Prostate gland (tissue), 2 donors: ENCODE measurements at regions of chr3 and their contacts with region 1.

Region 1: DNA sequence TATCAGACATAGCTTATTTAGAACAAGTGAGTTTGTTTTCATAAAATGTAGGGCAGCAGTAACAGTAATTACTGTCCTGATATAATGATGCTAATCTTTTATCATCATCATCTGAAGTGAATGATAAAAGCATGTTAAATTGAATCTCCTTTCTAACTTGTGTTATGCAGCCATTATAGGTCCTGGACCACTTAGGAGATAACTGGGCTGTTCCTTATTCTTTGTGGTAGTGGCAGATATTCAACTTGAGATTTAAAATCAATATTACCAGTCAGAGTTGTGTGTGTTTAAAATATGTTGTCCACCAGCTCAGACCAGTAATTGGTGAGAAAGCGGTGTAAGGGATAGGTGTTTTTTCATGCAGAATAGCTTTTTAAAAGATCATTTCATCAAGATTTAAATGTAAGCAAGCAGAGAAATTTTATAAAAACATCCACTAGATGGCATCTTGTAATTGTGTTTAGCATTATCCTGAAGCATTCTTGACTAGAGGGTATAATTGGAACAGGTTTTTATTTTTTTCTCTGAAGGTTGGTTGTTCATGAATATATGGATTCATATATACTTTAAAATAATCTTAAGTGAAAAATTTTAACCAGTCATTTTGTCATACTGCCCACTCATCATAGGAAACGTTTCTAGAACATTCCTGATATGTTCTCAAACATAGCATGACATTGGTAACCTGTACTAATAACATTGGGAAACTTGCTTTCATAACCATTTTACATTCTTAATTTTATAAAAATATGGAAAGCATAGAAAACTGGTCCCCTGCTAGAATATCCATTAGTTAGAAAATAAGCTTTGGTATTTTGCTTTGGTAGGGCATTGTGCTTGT is 153.9 kb downstream of the BBX start:
- DNase-seq: no peak
- H3K4me3 ChIP-seq: no peak overlapping the region
- H3K27ac ChIP-seq: no peak overlapping the region
- H3K4me1 ChIP-seq: no peaks in the 10 kb centered on the region
- H3K27me3 ChIP-seq: no peaks in the 10 kb centered on the region
- CTCF ChIP-seq: peak in 3 of 4 experiments; percentile 55 to 64 (median 57)
- POLR2A ChIP-seq: no peak

Region 2: GRCh38 chr3:107429320-107430181 is 247.1 kb before region 1 on chr3:
- intact Hi-C with region 1: loop called (anchors 10 kb)
- DNase-seq: peak; percentile 69
- H3K4me3 ChIP-seq: peak overlapping the region; percentile 64 to 68
- H3K27ac ChIP-seq: peak overlapping the region; percentile 97 to 98
- H3K4me1 ChIP-seq: no peaks in the 10 kb centered on the region
- H3K27me3 ChIP-seq: no peaks in the 10 kb centered on the region
- CTCF ChIP-seq: peak; percentile 64 to 85 (median 82)
- POLR2A ChIP-seq: no peak

Region 3: DNA sequence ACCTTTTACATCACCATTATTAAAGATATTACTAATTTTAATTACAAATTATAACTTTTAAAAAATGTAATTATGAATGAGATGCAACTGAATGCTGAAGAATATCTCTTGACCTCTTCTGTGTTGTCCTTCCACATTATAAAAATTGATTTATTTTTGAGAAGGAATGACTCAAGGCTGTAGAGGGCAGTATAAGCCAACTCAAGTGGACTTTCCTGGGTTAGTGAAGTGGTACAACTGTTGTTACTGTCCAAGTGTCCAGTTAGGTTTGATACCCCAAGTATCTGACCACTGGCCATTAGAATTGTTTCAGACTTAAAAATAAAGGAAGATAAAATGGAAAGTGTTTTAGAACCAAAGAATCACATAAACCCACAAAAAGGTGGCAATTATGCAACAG is 102.0 kb before region 1 on chr3:
- intact Hi-C with region 1: loop called (anchors 10 kb)
- DNase-seq: no peak
- H3K4me3 ChIP-seq: no peak overlapping the region
- H3K27ac ChIP-seq: no peak overlapping the region
- H3K4me1 ChIP-seq: no peaks in the 10 kb centered on the region
- H3K27me3 ChIP-seq: no peaks in the 10 kb centered on the region
- CTCF ChIP-seq: peak in 3 of 4 experiments; percentile 27 to 55 (median 50)
- POLR2A ChIP-seq: no peak

Region 4: GRCh38 chr3:107740992-107741896 is 64.6 kb after region 1 on chr3:
- intact Hi-C with region 1: loop called (anchors 5 kb)
- DNase-seq: no peak
- H3K4me3 ChIP-seq: no peak overlapping the region
- H3K27ac ChIP-seq: no peak overlapping the region
- H3K4me1 ChIP-seq: no peaks in the 10 kb centered on the region
- H3K27me3 ChIP-seq: no peaks in the 10 kb centered on the region
- CTCF ChIP-seq: peak in 3 of 4 experiments; percentile 35 to 67 (median 65)
- POLR2A ChIP-seq: no peak